Esophagus muscularis mucosa (tissue), 4 donors: ENCODE measurements at regions of chr16 and their contacts with region 1.

Region 1: GRCh38 chr16:21300309-21301167 is 22.4 kb upstream of the CRYM start:
- DNase-seq: peak; percentile 98
- H3K4me3 ChIP-seq: peak overlapping the region; percentile 64 to 72 (median 68)
- H3K27ac ChIP-seq: peak overlapping the region; percentile 74 to 87 (median 82)
- H3K4me1 ChIP-seq: peaks cover 0 to 24% (median 15%) of the 10 kb centered on the region in 4 donors
- H3K27me3 ChIP-seq: no peaks in the 10 kb centered on the region
- CTCF ChIP-seq: peak; percentile 84 to 92 (median 86)
- EP300 ChIP-seq: no peak
- POLR2A ChIP-seq: no peak

Region 2: DNA sequence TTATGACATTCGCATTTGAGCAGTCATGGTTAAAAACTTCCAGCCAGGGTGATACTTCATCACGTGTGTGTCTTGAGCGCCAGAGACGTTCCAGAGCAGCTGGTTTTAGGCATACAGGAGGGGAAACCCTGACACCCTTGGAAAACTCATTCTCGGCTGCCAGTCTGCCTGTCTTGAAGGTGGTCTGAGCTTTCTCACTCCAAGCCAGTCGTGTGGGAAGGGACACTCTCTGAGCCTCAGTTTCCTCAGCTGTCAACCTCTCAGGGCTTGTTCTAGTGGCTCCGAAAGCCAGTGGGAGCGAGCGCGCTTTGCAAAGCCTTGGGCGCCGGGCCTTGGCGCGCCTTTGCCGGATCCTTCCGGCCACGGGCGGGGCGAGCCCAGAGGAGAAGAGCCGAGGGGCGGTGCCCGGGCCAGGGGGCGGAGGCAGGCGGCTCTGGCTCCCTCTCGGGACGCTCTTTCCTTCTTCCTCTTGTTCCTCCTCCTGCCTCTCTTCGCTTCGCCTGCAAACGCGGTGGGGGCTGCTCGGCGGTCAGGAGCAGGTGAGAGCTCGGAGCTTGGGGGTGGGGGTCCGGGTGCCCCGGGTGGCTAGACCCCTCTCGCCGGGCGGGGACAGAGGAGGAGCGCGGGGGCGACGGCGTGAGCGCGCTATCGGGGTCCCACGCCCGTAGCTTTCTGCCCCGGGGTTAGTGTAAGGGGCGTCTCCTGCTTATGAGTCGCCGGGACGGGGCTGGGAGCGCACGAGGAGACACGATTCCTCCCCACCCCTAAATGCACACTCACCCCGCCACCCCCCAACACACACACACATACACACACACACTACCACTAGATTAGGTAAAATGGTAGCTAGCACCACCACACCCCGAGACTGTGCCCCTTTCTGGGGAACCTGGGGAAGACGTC is 142.1 kb before region 1 on chr16 and contains the start of gene LDAF1:
- intact Hi-C with region 1: loop called (anchors 2 kb)
- DNase-seq: peak; percentile 94
- H3K4me3 ChIP-seq: peak within 1 kb of the TSS; percentile 75 to 97 (median 88)
- H3K27ac ChIP-seq: peak within 1 kb of the TSS; percentile 87 to 95 (median 92)
- H3K4me1 ChIP-seq: peaks cover 36 to 58% (median 57%) of the 10 kb centered on the region in 4 donors
- H3K27me3 ChIP-seq: no peaks in the 10 kb centered on the region
- CTCF ChIP-seq: peak in 2 of 3 experiments; percentile 16 to 18
- EP300 ChIP-seq: no peak
- POLR2A ChIP-seq: no peak
- total RNA-seq, gene LDAF1: 98.7 to 208 (median 141) TPM

Region 3: DNA sequence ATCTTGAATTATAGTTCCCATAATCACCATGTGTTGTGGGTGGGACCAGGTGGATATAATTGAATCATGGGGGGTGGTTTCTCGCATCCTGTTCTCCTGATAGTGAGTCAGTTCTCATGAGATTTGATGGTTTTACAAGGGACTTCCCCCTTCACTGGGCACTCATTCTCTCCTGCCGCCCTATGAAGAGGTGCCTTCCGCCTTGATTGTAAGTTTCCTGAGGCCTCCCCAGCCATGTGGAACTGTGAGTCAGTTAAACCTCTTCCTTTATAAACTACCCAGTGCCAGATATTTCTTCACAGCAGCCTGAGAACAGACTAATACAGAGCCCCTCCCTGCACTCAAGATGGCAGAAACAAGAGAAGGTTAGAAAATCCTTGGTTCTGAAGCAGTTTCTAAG is 115.7 kb before region 1 on chr16:
- intact Hi-C with region 1: loop called (anchors 2 kb)
- DNase-seq: no peak
- H3K4me3 ChIP-seq: no peak overlapping the region
- H3K27ac ChIP-seq: no peak overlapping the region
- H3K4me1 ChIP-seq: peaks cover 0 to 9% (median 7%) of the 10 kb centered on the region in 4 donors
- H3K27me3 ChIP-seq: no peaks in the 10 kb centered on the region
- CTCF ChIP-seq: no peak
- EP300 ChIP-seq: no peak
- POLR2A ChIP-seq: no peak

Region 4: DNA sequence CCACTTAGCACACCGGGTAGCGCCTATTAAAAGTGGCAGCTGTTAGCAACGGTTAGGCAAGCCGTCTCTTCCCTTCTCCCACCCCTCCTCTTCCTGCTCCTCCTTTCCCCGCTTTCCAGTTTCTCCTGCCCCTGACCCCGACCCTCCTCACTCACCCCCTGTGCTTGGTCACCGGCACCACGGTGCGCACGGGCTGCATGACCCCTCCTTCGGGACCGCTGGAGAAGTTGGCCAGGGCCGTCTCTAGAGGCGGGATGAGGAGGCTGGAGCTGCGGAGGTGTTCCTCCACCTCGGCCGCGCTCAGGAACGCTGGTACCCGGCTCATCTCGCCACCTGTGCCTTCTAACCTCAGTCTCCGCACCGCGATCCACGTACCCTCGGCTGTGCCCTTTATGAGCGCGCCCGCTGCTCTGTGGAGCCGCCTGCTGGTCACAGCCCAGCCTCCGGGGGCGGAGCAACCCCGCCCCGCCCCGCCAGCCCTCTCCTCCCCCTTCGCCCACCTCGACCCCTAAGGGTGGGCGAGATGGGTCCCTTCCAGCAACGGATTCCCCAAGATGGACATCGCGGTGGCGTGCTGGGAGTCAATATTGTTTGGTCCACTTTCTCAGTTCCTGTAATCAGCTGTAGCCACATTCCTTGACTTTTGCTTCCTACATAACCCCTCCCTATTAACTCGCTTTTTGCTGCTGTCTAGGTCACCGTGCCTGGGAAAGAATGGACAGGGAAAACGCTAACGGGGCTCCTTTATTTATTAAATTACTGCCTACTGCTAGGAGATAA is 22.4 kb before region 1 on chr16 and contains the start of gene CRYM:
- intact Hi-C with region 1: loop called (anchors 1 kb)
- DNase-seq: peak; percentile 72
- H3K4me3 ChIP-seq: peak within 1 kb of the TSS; percentile 48 to 61 (median 50)
- H3K27ac ChIP-seq: no peak within 1 kb of the TSS
- H3K4me1 ChIP-seq: peaks cover 5 to 12% (median 11%) of the 10 kb centered on the region in 4 donors
- H3K27me3 ChIP-seq: peaks cover 0 to 51% (median 0%) of the 10 kb centered on the region in 4 donors
- CTCF ChIP-seq: peak; percentile 68 to 88 (median 75)
- EP300 ChIP-seq: no peak
- POLR2A ChIP-seq: no peak
- total RNA-seq, gene CRYM: 1.0 to 1.2 TPM in 2 of 4 donors, not detected in the others

Region 5: DNA sequence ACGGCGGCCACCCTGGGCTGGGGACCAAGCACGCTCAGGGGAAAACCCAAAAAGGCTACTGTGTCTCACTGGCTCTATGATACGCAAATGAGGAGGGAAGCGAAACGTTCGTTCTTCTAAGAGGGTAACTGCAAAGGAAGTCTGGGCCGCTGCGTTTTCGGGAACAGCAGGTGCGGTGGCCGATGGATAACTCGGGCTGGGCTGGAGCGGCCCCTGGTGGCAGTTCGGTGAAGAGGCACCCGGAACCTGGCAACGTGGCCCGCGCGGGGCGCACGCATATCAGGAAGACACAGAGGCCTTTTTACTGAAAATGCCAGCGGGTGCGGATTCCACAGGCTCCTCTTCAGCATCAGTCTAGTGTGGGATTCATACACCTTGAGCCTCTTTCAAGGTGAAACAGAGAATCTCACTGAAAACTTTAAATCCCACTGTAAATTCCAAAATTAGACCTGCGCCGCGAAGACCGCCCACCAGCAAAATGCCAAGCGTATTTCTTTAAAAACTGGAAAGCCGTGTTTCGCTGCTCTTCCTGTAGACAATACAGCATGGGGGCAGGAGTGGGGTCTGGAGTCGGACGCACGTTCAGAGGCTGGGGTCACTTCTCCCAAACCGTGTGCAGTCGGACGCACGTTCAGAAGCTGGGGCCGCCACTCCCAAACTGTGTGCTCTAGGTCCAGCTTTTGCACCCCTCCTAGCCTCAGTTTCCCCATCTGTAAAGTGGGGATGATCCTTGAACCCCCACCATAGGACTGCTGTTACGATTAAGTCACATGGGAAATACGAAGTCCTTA is 254.5 kb after region 1 on chr16:
- intact Hi-C with region 1: loop called (anchors 5 kb)
- DNase-seq: peak; percentile 98
- H3K4me3 ChIP-seq: peak overlapping the region; percentile 17 to 33 (median 26)
- H3K27ac ChIP-seq: no peak overlapping the region
- H3K4me1 ChIP-seq: peaks cover 9 to 29% (median 22%) of the 10 kb centered on the region in 4 donors
- H3K27me3 ChIP-seq: peaks cover 0 to 11% (median 0%) of the 10 kb centered on the region in 4 donors
- CTCF ChIP-seq: peak; percentile 90 to 99 (median 92)
- EP300 ChIP-seq: no peak
- POLR2A ChIP-seq: no peak